Activated CD4-positive, alpha-beta memory T cell treated with anti-CD3 and anti-CD28 coated beads for 36 hours (primary cell): ENCODE measurements at regions of chr20 and their contacts with region 1.

Region 1: GRCh38 chr20:36745927-36746659 is at the start of gene NDRG3:
- DNase-seq: peak; percentile 95
- H3K4me3 Mint-ChIP-seq: peak within 1 kb of the TSS; percentile 88
- H3K27ac Mint-ChIP-seq: peak within 1 kb of the TSS; percentile 84
- H3K4me1 Mint-ChIP-seq: peaks cover 13% of the 10 kb centered on the region
- H3K27me3 Mint-ChIP-seq: no peaks in the 10 kb centered on the region
- total RNA-seq, gene NDRG3: 29.9 to 33.1 TPM

Region 2: GRCh38 chr20:36460648-36461599 is 285.2 kb before region 1 on chr20:
- CTCF ChIA-PET with region 1: no interaction called
- POLR2A ChIA-PET with region 1: no interaction called
- intact Hi-C with region 1: loop called (anchors 10 kb)
- DNase-seq: peak; percentile 91
- H3K4me3 Mint-ChIP-seq: peak overlapping the region; percentile 65
- H3K27ac Mint-ChIP-seq: peak overlapping the region; percentile 83
- H3K4me1 Mint-ChIP-seq: peaks cover 46% of the 10 kb centered on the region
- H3K27me3 Mint-ChIP-seq: no peaks in the 10 kb centered on the region

Region 3: GRCh38 chr20:36573103-36573794 is 172.8 kb before region 1 on chr20 and contains the start of gene TGIF2:
- CTCF ChIA-PET with region 1: interaction called, 3 read pairs
- POLR2A ChIA-PET with region 1: no interaction called
- intact Hi-C with region 1: loop called (anchors 1 kb)
- DNase-seq: peak; percentile 94
- H3K4me3 Mint-ChIP-seq: peak within 1 kb of the TSS; percentile 87
- H3K27ac Mint-ChIP-seq: peak within 1 kb of the TSS; percentile 92
- H3K4me1 Mint-ChIP-seq: peaks cover 33% of the 10 kb centered on the region
- H3K27me3 Mint-ChIP-seq: no peaks in the 10 kb centered on the region
- total RNA-seq, gene TGIF2: 39.7 to 43.0 TPM

Region 4: GRCh38 chr20:36605399-36606157 is 140.5 kb before region 1 on chr20 and contains the start of gene RAB5IF:
- CTCF ChIA-PET with region 1: interaction called, 8 read pairs
- POLR2A ChIA-PET with region 1: no interaction called
- intact Hi-C with region 1: loop called (anchors 5 kb)
- DNase-seq: peak; percentile 100
- H3K4me3 Mint-ChIP-seq: peak within 1 kb of the TSS; percentile 99
- H3K27ac Mint-ChIP-seq: peak within 1 kb of the TSS; percentile 97
- H3K4me1 Mint-ChIP-seq: peaks cover 28% of the 10 kb centered on the region
- H3K27me3 Mint-ChIP-seq: no peaks in the 10 kb centered on the region
- total RNA-seq, gene RAB5IF: 113 to 114 TPM

Region 5: GRCh38 chr20:36613974-36614373 is 132.1 kb before region 1 on chr20:
- CTCF ChIA-PET with region 1: interaction called, 17 read pairs
- POLR2A ChIA-PET with region 1: no interaction called
- intact Hi-C with region 1: loop called (anchors 5 kb)
- DNase-seq: no peak
- H3K4me3 Mint-ChIP-seq: no peak overlapping the region
- H3K27ac Mint-ChIP-seq: peak overlapping the region; percentile 28
- H3K4me1 Mint-ChIP-seq: peaks cover 12% of the 10 kb centered on the region
- H3K27me3 Mint-ChIP-seq: no peaks in the 10 kb centered on the region

Region 6: DNA sequence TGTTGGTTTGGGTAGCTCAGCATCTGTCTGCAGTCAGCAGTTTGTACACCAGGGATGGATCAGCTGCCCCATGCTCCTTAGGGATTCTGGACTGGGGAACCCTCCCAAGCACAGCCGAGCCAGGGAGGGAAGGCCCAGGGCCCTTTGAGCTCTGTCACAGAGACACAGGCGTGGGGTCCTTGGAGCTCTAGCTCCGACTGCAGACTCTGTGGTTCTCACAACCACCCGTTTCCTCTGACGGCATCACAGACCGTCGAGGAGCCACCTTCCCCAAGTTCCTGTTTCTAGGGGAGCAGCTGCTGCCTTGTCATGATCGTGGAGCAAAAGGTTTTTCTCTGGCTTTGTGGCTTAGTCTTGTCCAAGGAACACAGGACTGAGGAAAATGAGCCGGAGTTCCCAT is 100.1 kb before region 1 on chr20 and contains the start of gene SLA2:
- CTCF ChIA-PET with region 1: no interaction called
- POLR2A ChIA-PET with region 1: no interaction called
- intact Hi-C with region 1: loop called (anchors 2 kb)
- DNase-seq: peak; percentile 81
- H3K4me3 Mint-ChIP-seq: peak within 1 kb of the TSS; percentile 97
- H3K27ac Mint-ChIP-seq: peak within 1 kb of the TSS; percentile 100
- H3K4me1 Mint-ChIP-seq: peaks cover 47% of the 10 kb centered on the region
- H3K27me3 Mint-ChIP-seq: no peaks in the 10 kb centered on the region
- total RNA-seq, gene SLA2: 47.1 to 47.7 TPM

Region 7: GRCh38 chr20:36728986-36729385 is 17.1 kb before region 1 on chr20:
- CTCF ChIA-PET with region 1: interaction called, 21 read pairs
- POLR2A ChIA-PET with region 1: interaction called, 6 read pairs
- intact Hi-C with region 1: loop called (anchors 2 kb)
- DNase-seq: peak; percentile 26
- H3K4me3 Mint-ChIP-seq: no peak overlapping the region
- H3K27ac Mint-ChIP-seq: no peak overlapping the region
- H3K4me1 Mint-ChIP-seq: peaks cover 22% of the 10 kb centered on the region
- H3K27me3 Mint-ChIP-seq: no peaks in the 10 kb centered on the region

Region 8: GRCh38 chr20:36895036-36895435 is 148.9 kb after region 1 on chr20:
- CTCF ChIA-PET with region 1: no interaction called
- POLR2A ChIA-PET with region 1: no interaction called
- intact Hi-C with region 1: no loop called
- DNase-seq: peak; percentile 56
- H3K4me3 Mint-ChIP-seq: no peak overlapping the region
- H3K27ac Mint-ChIP-seq: peak overlapping the region; percentile 77
- H3K4me1 Mint-ChIP-seq: peaks cover 20% of the 10 kb centered on the region
- H3K27me3 Mint-ChIP-seq: no peaks in the 10 kb centered on the region